ENCODE measurements at regions of chr1 and their contacts with region 1.

Region 1: DNA sequence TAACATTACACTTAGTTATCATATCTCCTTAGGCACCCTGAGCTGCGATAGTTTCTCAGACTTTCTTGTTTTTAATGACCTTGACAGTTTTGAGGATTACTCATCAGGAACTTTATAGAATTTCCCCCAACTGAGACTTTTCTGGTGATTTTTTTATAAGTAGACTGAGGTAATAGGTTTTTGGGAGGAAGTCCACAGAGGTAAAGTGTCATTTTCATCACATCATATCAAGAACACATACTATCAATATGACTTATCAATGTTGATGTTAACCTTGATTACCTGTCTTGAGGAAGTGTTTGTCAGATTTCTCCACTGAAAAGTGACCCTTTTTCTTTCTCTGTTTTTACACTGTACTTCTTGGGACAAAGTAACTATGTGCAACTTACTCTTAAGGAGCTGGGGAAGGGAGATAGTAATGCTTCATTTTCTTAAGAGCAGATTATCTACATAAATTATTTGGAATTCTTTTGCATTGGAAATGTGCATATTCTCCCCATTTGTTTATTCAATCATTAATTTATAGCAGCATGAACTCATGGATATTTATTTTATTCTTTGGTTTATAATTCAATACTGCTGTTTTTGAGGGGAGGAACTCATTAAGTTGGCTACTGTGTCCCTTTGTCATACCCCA is 72.8 kb upstream of the HSD17B7 start:
- DNase-seq: no peak
- ATAC-seq: no peak
- H3K4me3 ChIP-seq: no peak overlapping the region
- H3K27ac ChIP-seq: no peak overlapping the region
- H3K4me1 ChIP-seq: no peaks in the 10 kb centered on the region
- H3K27me3 ChIP-seq: no peaks in the 10 kb centered on the region
- CTCF ChIP-seq: no peak

Region 2: GRCh38 chr1:162660574-162660973 is 57.1 kb before region 1 on chr1:
- intact Hi-C with region 1: no loop called
- DNase-seq: no peak
- ATAC-seq: no peak
- H3K4me3 ChIP-seq: no peak overlapping the region
- H3K27ac ChIP-seq: no peak overlapping the region
- H3K4me1 ChIP-seq: no peaks in the 10 kb centered on the region
- H3K27me3 ChIP-seq: no peaks in the 10 kb centered on the region
- CTCF ChIP-seq: no peak

Region 3: DNA sequence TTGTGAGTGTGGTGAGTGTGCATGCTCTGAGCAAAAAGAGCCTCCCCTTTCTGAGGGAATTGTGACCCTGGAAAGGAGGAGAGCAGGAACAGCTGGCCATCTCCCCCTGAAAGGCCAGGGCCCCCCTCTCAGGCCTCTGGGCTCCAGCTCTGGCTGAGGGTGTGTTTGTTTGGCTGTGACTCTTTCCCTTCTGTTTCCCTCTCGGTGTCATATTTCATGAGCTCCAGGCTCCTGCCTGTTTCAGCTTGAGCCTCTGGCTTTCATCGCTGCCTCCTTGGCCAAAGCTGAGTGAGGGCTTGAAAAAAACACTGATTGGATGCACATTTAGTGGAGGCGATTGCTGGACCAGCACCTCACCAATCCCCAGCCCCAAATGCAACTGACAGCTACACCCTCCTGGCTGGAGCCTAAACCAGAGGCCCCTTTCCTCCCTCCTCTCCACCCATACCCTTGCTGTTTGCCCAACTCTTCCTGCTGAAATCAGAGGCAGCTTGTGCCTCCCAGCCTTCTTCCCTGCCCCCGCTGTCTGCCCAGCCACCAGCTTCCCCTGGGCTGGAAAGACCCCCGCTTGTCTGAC is 21.3 kb before region 1 on chr1:
- intact Hi-C with region 1: no loop called
- DNase-seq: peak; percentile 72 to 80
- ATAC-seq: peak; percentile 90 to 97 (median 94)
- H3K4me3 ChIP-seq: no peak overlapping the region
- H3K27ac ChIP-seq: peak overlapping the region; percentile 38
- H3K4me1 ChIP-seq: peaks cover 14% of the 10 kb centered on the region
- H3K27me3 ChIP-seq: no peaks in the 10 kb centered on the region
- CTCF ChIP-seq: no peak

Region 4: DNA sequence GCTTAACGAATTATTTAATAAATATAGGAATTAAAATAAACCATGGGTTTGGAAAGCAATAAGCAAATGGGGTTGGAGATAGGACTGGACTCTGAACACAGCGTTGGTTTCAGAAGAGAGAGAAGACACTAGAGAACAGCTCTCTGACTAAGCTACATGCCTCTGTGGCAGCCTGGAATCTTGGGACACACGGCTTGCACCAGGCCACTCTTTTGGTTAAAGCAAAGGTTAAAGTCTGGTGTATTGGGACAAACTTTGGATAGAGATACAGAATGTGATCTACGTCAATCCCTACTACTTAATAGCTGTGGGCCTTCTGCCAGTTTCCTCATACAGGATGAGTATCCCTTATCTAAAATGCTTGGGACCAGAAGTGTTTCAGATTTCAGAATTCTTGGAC is 23.1 kb after region 1 on chr1:
- intact Hi-C with region 1: loop called in 1 of 2 experiments (anchors 1 kb)
- DNase-seq: no peak
- ATAC-seq: no peak
- H3K4me3 ChIP-seq: no peak overlapping the region
- H3K27ac ChIP-seq: no peak overlapping the region
- H3K4me1 ChIP-seq: no peaks in the 10 kb centered on the region
- H3K27me3 ChIP-seq: no peaks in the 10 kb centered on the region
- CTCF ChIP-seq: no peak